Ovary (tissue), 10 donors: ENCODE measurements at regions of chr11 and their contacts with region 1.

Region 1: GRCh38 chr11:74449369-74449931 is 17.9 kb downstream of the KCNE3 start:
- DNase-seq: peak in 1 of 5 donors; percentile 63
- H3K4me3 ChIP-seq: no peak overlapping the region
- H3K27ac ChIP-seq: no peak overlapping the region
- H3K4me1 ChIP-seq: peaks cover 3% of the 10 kb centered on the region
- H3K27me3 ChIP-seq: no peaks in the 10 kb centered on the region
- CTCF ChIP-seq: peak; percentile 47 to 83 (median 59)
- EP300 ChIP-seq: no peak
- POLR2A ChIP-seq: no peak

Region 2: DNA sequence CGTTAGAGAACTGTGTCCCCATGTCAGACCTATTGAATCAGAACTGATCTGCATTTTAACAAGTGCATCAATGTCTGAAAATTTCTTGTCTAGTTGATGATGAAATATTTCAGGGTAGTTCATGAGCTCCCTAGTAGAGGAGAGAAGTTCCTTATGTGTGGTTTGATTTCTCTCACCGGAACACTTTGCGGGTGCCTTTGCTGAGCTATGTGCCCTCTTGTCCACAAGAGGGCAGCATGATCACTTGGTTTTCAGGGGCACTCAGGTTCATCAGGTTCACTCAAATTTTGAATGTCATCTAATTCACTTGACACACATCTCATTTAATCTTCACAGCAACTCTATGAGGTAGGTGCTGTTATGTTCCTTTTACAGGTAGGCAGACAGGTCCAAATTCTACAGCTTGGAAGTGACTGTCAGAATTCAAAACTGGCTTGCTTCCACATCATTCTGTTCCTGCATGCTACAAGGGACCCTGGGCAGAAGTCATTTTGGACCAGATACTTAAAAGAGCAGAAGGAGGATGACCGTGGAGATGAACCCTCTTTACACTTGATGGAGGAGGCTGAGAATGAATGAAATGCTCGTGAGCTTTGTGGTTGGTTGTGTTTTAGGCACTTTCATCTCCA is 193.6 kb before region 1 on chr11:
- intact Hi-C with region 1: loop called (anchors 5 kb)
- DNase-seq: peak; percentile 23 to 58 (median 51)
- H3K4me3 ChIP-seq: no peak overlapping the region
- H3K27ac ChIP-seq: no peak overlapping the region
- H3K4me1 ChIP-seq: peaks cover 5% of the 10 kb centered on the region
- H3K27me3 ChIP-seq: no peaks in the 10 kb centered on the region
- CTCF ChIP-seq: peak; percentile 53 to 75 (median 74)
- EP300 ChIP-seq: no peak
- POLR2A ChIP-seq: no peak

Region 3: DNA sequence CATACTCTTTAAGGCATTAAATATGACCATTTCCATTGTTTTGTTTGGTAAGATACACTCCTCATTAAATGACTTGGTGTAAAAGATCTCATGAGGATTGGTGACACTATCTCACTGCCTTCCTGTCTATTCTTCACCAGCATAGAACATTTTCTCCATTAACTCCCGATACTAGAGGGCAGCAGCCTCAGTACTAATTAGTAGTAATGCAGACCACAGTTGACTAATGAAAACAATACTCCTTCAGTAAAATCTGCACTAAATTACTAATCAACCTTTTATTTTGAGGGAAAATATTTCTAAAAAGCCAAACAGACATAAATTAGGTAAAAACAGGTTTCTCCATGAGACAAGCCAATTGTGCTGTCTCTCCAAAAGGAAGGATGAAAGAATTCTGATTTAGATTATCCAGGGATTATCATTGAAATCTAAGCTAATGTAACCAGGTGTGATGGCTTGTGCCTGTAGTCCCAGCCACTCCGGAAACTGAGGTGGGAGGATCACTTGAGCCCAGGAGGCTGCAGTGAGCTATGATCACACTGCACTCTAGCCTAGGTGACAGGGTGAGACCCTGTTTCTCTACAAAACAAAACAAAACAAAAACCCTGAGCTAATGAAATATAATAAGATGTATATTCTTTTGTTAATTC is 60.6 kb before region 1 on chr11:
- intact Hi-C with region 1: loop called (anchors 5 to 10 kb)
- DNase-seq: peak in 4 of 5 donors; percentile 25 to 78 (median 50)
- H3K4me3 ChIP-seq: no peak overlapping the region
- H3K27ac ChIP-seq: no peak overlapping the region
- H3K4me1 ChIP-seq: no peaks in the 10 kb centered on the region
- H3K27me3 ChIP-seq: no peaks in the 10 kb centered on the region
- CTCF ChIP-seq: peak in 2 of 3 donors; percentile 63 to 73
- EP300 ChIP-seq: no peak
- POLR2A ChIP-seq: no peak

Region 4: GRCh38 chr11:74398244-74399159 is 50.9 kb before region 1 on chr11 and contains the start of gene PGM2L1:
- intact Hi-C with region 1: loop called in 2 of 4 experiments (anchors 10 kb)
- DNase-seq: peak; percentile 92 to 95 (median 93)
- H3K4me3 ChIP-seq: peak within 1 kb of the TSS; percentile 87
- H3K27ac ChIP-seq: peak within 1 kb of the TSS; percentile 75 to 90
- H3K4me1 ChIP-seq: no peaks in the 10 kb centered on the region
- H3K27me3 ChIP-seq: no peaks in the 10 kb centered on the region
- CTCF ChIP-seq: no peak
- EP300 ChIP-seq: peak; percentile 70
- POLR2A ChIP-seq: peak; percentile 35
- total RNA-seq, gene PGM2L1: 1.4 to 6.2 (median 2.3) TPM

Region 5: GRCh38 chr11:74559934-74560309 is 110.5 kb after region 1 on chr11:
- intact Hi-C with region 1: loop called in 1 of 4 experiments (anchors 10 kb)
- DNase-seq: no peak
- H3K4me3 ChIP-seq: no peak overlapping the region
- H3K27ac ChIP-seq: no peak overlapping the region
- H3K4me1 ChIP-seq: no peaks in the 10 kb centered on the region
- H3K27me3 ChIP-seq: no peaks in the 10 kb centered on the region
- CTCF ChIP-seq: no peak
- EP300 ChIP-seq: no peak
- POLR2A ChIP-seq: no peak

Region 6: DNA sequence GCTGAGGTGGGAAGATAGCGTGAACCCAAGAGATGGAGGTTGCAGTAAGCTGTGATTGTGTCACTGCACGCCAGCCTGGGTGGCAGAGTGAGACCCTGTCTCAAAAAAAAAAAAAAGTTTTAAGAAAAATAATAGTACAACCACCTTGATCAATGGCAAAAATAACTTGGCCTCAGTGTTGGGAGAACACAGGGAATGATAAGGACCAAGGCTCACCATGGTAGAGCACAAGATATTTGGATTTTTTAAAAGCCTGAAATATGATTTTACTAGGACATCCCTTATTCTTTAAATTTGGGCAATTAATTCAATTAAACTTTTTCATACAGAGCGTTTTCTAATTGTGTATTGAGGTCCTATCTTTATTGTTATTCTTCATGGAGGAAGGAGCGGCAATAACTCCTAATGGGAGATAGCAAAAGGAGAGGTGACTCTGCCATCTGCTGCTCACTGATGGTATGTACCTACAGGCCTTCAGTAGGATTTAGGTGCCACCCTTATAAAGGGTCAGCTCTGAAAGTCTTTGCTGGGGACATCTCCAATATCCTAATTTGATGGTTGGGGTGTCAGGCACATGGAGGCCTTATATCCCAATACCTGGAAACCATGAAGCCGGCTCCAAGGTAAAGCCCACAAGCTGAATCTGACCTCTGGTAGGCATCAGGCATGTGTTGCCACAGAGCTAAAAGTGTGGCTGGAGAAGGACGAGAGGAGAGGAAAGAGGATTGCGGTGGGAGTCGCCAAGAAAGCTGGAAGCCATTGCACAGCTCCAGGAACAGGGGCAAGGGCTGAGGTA is 121.0 kb after region 1 on chr11:
- intact Hi-C with region 1: loop called (anchors 2 to 10 kb)
- DNase-seq: peak in 4 of 5 donors; percentile 30 to 58 (median 38)
- H3K4me3 ChIP-seq: no peak overlapping the region
- H3K27ac ChIP-seq: no peak overlapping the region
- H3K4me1 ChIP-seq: no peaks in the 10 kb centered on the region
- H3K27me3 ChIP-seq: no peaks in the 10 kb centered on the region
- CTCF ChIP-seq: peak; percentile 23 to 68 (median 59)
- EP300 ChIP-seq: no peak
- POLR2A ChIP-seq: no peak

Region 7: GRCh38 chr11:74726547-74727182 is 277.2 kb after region 1 on chr11:
- intact Hi-C with region 1: loop called in 1 of 4 experiments (anchors 10 kb)
- DNase-seq: peak; percentile 71 to 84 (median 78)
- H3K4me3 ChIP-seq: no peak overlapping the region
- H3K27ac ChIP-seq: no peak overlapping the region
- H3K4me1 ChIP-seq: no peaks in the 10 kb centered on the region
- H3K27me3 ChIP-seq: no peaks in the 10 kb centered on the region
- CTCF ChIP-seq: peak; percentile 84 to 94 (median 91)
- EP300 ChIP-seq: no peak
- POLR2A ChIP-seq: peak; percentile 24